ENCODE measurements at regions of chr9 and their contacts with region 1.

Region 1: DNA sequence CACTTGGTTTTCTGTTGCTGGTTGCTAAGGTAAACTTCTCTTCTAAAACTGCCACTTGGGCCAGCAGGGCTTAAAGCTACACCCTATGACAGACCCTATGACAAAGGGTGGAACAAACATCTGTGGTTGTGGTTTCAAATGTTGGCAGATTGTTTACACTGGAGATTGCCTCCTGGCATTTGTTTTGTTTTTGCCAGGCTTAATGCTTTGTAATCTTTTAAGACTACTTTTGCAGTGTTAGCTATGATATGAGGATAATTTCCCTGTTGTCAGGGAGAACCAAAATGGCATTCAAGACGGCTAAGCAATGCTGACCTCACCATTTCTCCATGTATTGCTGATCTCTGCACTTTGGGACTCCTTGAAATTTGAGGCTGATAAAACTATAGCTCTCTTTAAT is 50.3 kb downstream of the MAMDC2 start:
- DNase-seq: no peak
- ATAC-seq: peak in 2 of 4 donors; percentile 29 to 47
- H3K4me3 ChIP-seq: no peak overlapping the region
- H3K27ac ChIP-seq: no peak overlapping the region
- H3K4me1 ChIP-seq: no peaks in the 10 kb centered on the region
- H3K27me3 ChIP-seq: no peaks in the 10 kb centered on the region
- CTCF ChIP-seq: no peak

Region 2: GRCh38 chr9:70020991-70021571 is 72.9 kb before region 1 on chr9:
- intact Hi-C with region 1: loop called in 1 of 3 experiments (anchors 10 kb)
- DNase-seq: peak in 1 of 6 donors; percentile 26
- ATAC-seq: peak in 1 of 4 donors; percentile 53
- H3K4me3 ChIP-seq: no peak overlapping the region
- H3K27ac ChIP-seq: no peak overlapping the region
- H3K4me1 ChIP-seq: no peaks in the 10 kb centered on the region
- H3K27me3 ChIP-seq: no peaks in the 10 kb centered on the region
- CTCF ChIP-seq: no peak

Measured in pancreas (tissue), 10 donors.